Psoas muscle (tissue), 8 donors: ENCODE measurements at regions of chr16 and their contacts with region 1.

Region 1: DNA sequence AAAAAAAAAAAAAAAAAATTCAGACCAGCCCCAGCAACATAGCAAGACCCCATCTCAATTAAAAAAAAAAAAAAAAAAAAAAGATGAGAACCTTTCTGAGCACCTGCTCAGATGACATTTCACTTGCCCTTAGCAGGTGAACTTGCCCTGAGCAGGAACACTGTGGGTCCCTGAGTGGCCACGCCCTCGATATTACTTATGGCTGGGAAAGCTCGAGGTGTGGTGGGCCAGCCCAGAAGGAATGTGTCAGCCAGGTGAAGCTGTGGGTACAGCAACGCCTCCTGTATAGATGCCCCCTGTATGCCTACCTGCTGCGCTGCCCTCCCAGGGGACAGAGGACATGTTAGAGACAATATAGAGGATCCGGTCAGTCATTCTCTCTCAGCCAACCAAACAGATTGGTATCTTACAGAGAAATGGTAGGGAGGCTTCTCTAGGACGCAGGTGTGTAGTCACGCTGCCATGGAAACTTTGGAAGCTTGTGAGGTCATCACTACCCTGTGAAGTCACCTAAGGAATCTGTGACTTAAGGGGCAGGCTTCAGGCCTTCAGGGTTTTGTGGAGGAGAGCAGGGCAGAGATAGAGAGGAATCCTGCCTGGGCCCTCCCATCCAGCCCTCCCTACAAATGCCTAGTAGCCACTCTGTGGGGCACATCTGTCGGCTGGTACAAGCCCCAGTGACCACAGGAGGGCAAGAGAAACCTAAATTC is at the start of gene DPEP2NB:
- DNase-seq: no peak
- ATAC-seq: no peak
- H3K4me3 ChIP-seq: no peak within 1 kb of the TSS
- H3K27ac ChIP-seq: no peak within 1 kb of the TSS
- H3K4me1 ChIP-seq: no peaks in the 10 kb centered on the region
- H3K27me3 ChIP-seq: no peaks in the 10 kb centered on the region
- CTCF ChIP-seq: no peak
- total RNA-seq, gene DPEP2NB: not detected

Region 2: DNA sequence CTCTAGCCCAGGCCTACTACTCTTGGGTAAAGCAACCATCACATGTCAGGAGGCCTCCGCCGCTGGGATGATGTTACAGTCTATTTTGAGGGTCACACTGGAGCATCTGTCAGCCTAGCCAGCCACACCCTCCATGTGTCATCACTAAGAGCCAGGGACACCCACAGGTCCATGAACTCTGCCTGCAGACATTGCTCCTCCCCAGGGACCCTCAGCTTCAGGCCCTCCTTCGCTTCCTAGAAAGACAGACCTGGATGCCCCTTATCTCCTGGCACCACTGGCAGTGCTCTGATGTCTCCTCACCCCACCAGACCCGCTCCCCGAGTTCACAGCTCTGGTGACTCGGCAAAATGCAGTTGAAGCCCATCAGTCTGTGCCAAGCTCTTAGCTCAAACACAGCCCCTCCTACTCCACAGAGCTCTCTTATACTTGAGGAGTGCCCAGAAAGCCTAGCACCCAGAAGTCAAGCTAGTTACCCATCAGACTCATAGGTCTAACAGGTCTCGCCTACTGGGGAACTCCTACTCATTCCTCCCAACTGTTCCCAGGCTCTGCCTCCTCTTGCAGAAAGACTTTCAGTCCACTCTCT is 215.1 kb before region 1 on chr16:
- intact Hi-C with region 1: no loop called
- DNase-seq: peak; percentile 71 to 88
- ATAC-seq: peak; percentile 97 to 99 (median 98)
- H3K4me3 ChIP-seq: peak overlapping the region; percentile 17
- H3K27ac ChIP-seq: peak overlapping the region; percentile 87
- H3K4me1 ChIP-seq: peaks cover 57% of the 10 kb centered on the region
- H3K27me3 ChIP-seq: no peaks in the 10 kb centered on the region
- CTCF ChIP-seq: no peak

Region 3: DNA sequence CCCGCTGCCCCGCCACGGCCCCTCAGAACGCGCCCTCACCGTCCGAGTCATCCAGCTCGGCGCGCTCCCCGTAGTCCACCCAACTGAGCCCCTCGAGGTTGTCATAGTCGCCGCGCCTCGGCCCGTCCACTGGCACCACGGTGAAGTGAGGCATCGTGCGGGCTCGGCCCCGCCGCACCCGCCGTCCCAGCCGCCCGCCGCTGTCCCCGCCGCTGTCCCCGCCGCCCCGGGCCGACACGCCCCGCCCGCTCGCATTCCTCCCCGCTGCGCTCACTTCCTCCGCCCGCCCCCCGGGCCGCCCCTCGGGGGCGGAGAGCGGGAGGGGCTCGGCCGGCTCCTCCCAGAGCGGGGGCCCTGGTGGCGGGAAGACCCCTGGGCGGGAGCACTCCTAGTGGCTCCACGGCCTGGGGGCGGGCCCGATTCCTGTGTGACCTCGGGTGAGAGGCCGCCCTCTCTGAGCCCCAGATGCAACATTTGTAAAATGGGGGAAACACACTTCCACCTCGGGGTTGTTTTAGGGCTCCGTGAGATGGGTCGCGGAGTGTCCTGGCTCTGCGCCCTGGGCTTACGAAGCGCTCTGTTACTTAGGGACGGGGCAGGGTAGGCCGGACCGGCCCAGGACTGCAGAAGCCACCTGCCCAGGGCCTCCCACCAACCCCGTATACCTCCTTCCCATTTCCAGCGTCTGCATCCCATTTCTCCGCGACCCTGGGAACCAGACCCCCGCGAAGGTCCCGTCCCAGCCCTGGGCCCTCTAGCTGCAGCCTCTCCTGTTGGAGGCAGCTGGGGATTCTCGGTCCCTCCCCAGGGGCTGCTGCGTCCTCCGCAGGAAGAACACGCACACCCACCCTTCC is 46.9 kb before region 1 on chr16 and contains the start of gene SLC12A4:
- intact Hi-C with region 1: no loop called
- DNase-seq: peak; percentile 89 to 93
- ATAC-seq: peak; percentile 61 to 83 (median 73)
- H3K4me3 ChIP-seq: peak within 1 kb of the TSS; percentile 88
- H3K27ac ChIP-seq: peak within 1 kb of the TSS; percentile 91
- H3K4me1 ChIP-seq: peaks cover 38% of the 10 kb centered on the region
- H3K27me3 ChIP-seq: no peaks in the 10 kb centered on the region
- CTCF ChIP-seq: no peak
- total RNA-seq, gene SLC12A4: 24.1 to 89.5 (median 34.9) TPM

Region 4: DNA sequence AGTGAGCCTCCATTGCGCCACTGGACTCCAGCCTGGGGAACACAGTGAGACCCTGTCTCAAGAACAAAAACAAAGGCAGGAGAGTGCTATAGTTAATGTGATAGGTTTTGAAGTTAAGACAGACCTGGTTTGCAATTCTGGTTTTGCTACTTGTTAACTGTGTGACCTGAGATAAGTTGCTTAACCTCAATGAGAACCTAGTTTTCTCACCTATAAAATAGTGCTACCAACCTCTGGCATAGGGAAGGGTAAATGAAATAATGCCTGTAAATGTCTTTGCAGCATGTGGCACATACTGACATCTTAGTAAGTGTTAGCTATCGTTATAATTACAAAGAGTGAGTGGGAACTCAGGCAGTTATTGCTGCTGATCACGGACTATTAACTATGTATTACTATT is 39.8 kb after region 1 on chr16:
- intact Hi-C with region 1: loop called in 1 of 2 experiments (anchors 2 kb)
- DNase-seq: no peak
- ATAC-seq: no peak
- H3K4me3 ChIP-seq: no peak overlapping the region
- H3K27ac ChIP-seq: no peak overlapping the region
- H3K4me1 ChIP-seq: no peaks in the 10 kb centered on the region
- H3K27me3 ChIP-seq: no peaks in the 10 kb centered on the region
- CTCF ChIP-seq: no peak